Adrenal gland (tissue), 19 donors: ENCODE measurements at regions of chr11 and their contacts with region 1.

Region 1: GRCh38 chr11:101456812-101457211 is 127.0 kb downstream of the TRPC6 start:
- DNase-seq: no peak
- H3K4me3 ChIP-seq: no peak overlapping the region
- H3K27ac ChIP-seq: no peak overlapping the region
- H3K4me1 ChIP-seq: no peaks in the 10 kb centered on the region
- H3K27me3 ChIP-seq: no peaks in the 10 kb centered on the region
- CTCF ChIP-seq: peak; percentile 30 to 61 (median 49)
- POLR2A ChIP-seq: no peak

Region 2: DNA sequence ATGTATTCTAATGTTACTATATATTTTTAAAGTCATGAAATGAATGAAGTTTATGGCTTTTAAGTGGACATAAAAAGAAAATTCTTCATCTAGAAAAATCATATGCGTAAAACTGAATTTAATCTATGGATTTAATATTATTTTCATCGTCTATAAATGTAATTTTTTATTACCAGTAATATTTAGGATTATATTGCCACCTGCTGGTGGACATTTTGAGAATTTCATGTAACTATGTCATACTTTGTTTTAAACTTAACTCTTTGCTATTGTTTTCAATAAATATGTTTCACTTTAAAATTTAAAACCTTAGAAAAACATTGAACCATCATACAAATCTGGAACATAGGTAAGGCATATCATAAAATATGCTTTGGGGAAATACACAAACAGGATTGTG is 391.4 kb after region 1 on chr11:
- intact Hi-C with region 1: loop called (anchors 5 to 10 kb)
- DNase-seq: peak in 1 of 7 donors; percentile 9
- H3K4me3 ChIP-seq: no peak overlapping the region
- H3K27ac ChIP-seq: no peak overlapping the region
- H3K4me1 ChIP-seq: no peaks in the 10 kb centered on the region
- H3K27me3 ChIP-seq: no peaks in the 10 kb centered on the region
- CTCF ChIP-seq: peak; percentile 30 to 66 (median 45)
- POLR2A ChIP-seq: no peak

Region 3: GRCh38 chr11:102007567-102008437 is 551.0 kb after region 1 on chr11:
- intact Hi-C with region 1: loop called in 1 of 2 experiments (anchors 10 kb)
- DNase-seq: no peak
- H3K4me3 ChIP-seq: no peak overlapping the region
- H3K27ac ChIP-seq: no peak overlapping the region
- H3K4me1 ChIP-seq: peaks cover 10 to 12% of the 10 kb centered on the region in 2 donors
- H3K27me3 ChIP-seq: no peaks in the 10 kb centered on the region
- CTCF ChIP-seq: peak; percentile 47 to 72 (median 56)
- POLR2A ChIP-seq: no peak